Heart left ventricle (tissue), 16 donors: ENCODE measurements at regions of chr10 and their contacts with region 1.

Region 1: GRCh38 chr10:123559066-123559822 is 106.9 kb upstream of the GPR26 start:
- DNase-seq: peak; percentile 46 to 85 (median 59)
- ATAC-seq: peak in 3 of 4 donors; percentile 87 to 91 (median 89)
- H3K4me3 ChIP-seq: no peak overlapping the region
- H3K27ac ChIP-seq: no peak overlapping the region
- H3K4me1 ChIP-seq: no peaks in the 10 kb centered on the region
- H3K27me3 ChIP-seq: peaks cover 0 to 31% (median 6%) of the 10 kb centered on the region in 9 donors
- CTCF ChIP-seq: peak; percentile 90 to 99 (median 98)
- POLR2A ChIP-seq: no peak

Region 2: GRCh38 chr10:122279725-122280141 is 1279.5 kb before region 1 on chr10:
- intact Hi-C with region 1: loop called in 1 of 10 experiments (anchors 10 kb)
- DNase-seq: peak in 3 of 5 donors; percentile 33 to 58 (median 34)
- ATAC-seq: peak; percentile 57 to 75 (median 72)
- H3K4me3 ChIP-seq: no peak overlapping the region
- H3K27ac ChIP-seq: no peak overlapping the region
- H3K4me1 ChIP-seq: peaks cover 0 to 13% (median 0%) of the 10 kb centered on the region in 12 donors
- H3K27me3 ChIP-seq: peaks cover 0 to 2% (median 0%) of the 10 kb centered on the region in 9 donors
- CTCF ChIP-seq: peak; percentile 40 to 69 (median 58)
- POLR2A ChIP-seq: no peak

Region 3: DNA sequence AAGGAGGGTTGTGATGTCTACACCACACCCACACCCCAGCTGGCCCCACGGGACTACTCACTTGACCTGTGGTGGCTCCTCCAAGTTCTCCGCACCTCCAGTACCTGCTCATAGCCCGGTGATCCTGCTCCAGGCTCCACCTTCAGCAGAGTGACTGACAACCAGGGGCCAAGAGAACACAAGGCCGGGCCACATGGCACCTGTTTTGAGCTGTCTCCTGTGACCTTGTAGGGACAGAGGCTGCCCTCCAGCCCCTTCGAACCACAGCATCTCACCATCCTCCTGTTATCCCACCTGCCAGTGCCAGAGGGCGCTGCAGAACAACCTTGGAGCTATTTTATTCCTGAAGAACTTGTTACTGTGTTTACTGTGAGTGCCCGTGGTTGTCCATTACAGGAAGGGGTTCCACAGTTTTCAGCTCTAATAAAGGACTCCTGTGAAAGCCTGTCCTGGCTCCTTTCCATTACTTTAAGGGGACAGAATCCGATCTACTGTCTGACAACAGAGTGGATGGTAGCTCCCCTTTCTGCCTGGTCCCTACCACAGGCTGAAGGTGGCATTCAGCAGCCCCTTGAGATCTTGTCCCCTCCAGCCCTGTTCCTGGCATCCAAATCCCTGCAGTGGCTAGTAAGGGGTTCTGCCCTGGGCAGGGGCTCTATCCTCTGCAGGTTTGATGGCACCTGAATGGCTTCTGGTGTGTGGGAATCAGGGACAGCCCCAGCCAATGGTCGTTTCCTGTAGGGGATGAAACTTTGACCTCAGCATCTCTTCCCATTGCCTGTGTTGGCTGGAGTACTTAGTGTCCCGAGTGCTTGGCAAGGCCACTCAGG is 910.4 kb before region 1 on chr10:
- intact Hi-C with region 1: loop called in 1 of 10 experiments (anchors 10 kb)
- DNase-seq: peak in 4 of 5 donors; percentile 24 to 51 (median 48)
- ATAC-seq: peak; percentile 54 to 83 (median 69)
- H3K4me3 ChIP-seq: no peak overlapping the region
- H3K27ac ChIP-seq: no peak overlapping the region
- H3K4me1 ChIP-seq: peaks cover 0 to 4% (median 0%) of the 10 kb centered on the region in 12 donors
- H3K27me3 ChIP-seq: peaks cover 0 to 5% (median 0%) of the 10 kb centered on the region in 9 donors
- CTCF ChIP-seq: peak; percentile 62 to 88 (median 79)
- POLR2A ChIP-seq: no peak

Region 4: DNA sequence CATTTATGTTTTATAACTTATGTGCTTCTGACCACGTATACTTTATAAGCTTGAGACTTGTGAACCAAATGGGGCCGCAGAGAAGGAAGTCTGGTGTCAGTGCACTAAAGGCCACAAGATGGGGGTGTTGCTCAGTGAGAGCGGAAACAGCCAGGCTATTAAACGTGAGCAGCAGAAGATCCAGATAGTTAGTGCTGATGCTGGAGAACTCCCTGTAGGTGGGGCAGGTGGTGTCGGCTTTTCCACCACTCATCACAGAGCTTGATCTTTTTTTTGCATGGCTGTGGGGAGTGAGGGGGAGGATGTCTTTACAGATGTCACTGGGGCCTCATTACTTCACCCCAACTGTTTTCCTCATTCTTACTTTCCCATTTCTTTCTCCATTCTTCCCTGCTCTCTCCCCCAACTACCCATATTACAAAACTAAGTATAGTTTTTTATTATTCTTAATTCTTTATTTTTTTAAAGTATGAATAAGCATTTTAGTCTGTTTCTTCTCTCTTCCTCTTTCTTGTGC is 515.8 kb before region 1 on chr10:
- intact Hi-C with region 1: loop called (anchors 1 to 5 kb)
- DNase-seq: peak in 1 of 5 donors; percentile 20
- ATAC-seq: peak in 3 of 4 donors; percentile 37 to 71 (median 61)
- H3K4me3 ChIP-seq: no peak overlapping the region
- H3K27ac ChIP-seq: no peak overlapping the region
- H3K4me1 ChIP-seq: no peaks in the 10 kb centered on the region
- H3K27me3 ChIP-seq: no peaks in the 10 kb centered on the region
- CTCF ChIP-seq: peak; percentile 29 to 63 (median 48)
- POLR2A ChIP-seq: no peak

Region 5: DNA sequence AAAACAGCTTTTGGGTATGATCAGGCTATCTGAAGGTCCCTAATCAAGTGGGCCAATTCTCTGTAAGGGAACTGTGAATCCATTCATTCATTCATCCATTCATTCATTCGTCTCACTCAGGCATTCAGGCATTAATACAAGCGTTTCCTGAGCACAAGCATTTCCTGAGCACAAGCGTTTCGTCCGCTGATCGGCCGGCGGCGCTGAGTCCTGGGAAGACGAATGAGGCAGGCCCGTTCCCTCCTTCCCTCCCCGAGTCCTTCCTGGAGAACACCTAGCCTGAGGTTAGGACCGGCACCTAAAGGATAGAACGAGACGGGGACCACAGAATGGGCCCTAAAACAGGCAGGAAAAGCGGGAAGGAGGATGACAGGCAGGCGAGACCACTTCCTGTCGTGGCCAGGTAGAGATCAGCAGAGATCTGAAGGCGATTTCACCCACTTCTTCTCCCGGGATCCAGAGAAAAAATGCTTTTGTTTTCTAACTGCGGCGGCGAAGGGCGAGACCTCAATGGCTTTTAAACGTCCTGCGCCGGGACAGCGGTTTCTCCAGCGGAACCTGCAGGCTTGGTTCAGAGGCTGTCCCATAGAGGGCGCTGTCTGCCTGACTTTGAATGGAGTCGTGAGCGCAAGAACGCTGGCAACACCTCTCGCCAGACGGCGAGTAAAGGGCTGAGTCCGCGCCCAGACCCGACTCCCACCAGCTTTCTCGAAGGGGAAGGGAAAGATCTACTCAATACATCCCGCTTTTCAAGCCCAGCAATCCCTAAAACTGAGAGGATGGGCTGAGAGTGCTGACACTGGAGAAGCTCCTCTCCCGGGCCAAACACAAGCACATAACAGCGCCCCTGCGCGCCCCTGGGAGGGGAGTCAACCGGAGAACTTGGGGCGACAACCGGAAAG is 426.4 kb before region 1 on chr10:
- intact Hi-C with region 1: loop called (anchors 1 to 5 kb)
- DNase-seq: peak; percentile 81 to 89 (median 83)
- ATAC-seq: peak; percentile 64 to 90 (median 84)
- H3K4me3 ChIP-seq: peak overlapping the region in 9 of 12 donors; percentile 14 to 49 (median 30)
- H3K27ac ChIP-seq: no peak overlapping the region
- H3K4me1 ChIP-seq: peaks cover 9 to 54% (median 41%) of the 10 kb centered on the region in 12 donors
- H3K27me3 ChIP-seq: peaks cover 58 to 100% (median 92%) of the 10 kb centered on the region in 9 donors
- CTCF ChIP-seq: peak; percentile 83 to 95 (median 91)
- POLR2A ChIP-seq: no peak